ENCODE measurements at regions of chr1 and their contacts with region 1.

Region 1: GRCh38 chr1:205591522-205592351 is 40.1 kb downstream of the ELK4 start:
- DNase-seq: peak; percentile 74
- ATAC-seq: peak; percentile 97
- H3K4me3 ChIP-seq: peak overlapping the region; percentile 46
- H3K27ac ChIP-seq: peak overlapping the region; percentile 11; the same call in 1 of the 2 replicates
- H3K4me1 ChIP-seq: peaks cover 4% of the 10 kb centered on the region
- H3K27me3 ChIP-seq: no peaks in the 10 kb centered on the region
- CTCF ChIP-seq: peak; percentile 99
- POLR2A ChIP-seq: peak; percentile 55; the same call in 1 of the 2 replicates
- RAD21 ChIP-seq: peak; percentile 100

Region 2: GRCh38 chr1:205528887-205529825 is 62.6 kb before region 1 on chr1:
- CTCF ChIA-PET with region 1: interaction called, 6 read pairs
- POLR2A ChIA-PET with region 1: no interaction called
- dilution Hi-C with region 1: no loop called
- in situ Hi-C with region 1: no loop called
- intact Hi-C with region 1: loop called (anchors 1 kb)
- DNase-seq: peak; percentile 50
- ATAC-seq: peak; percentile 95
- H3K4me3 ChIP-seq: no peak overlapping the region
- H3K27ac ChIP-seq: no peak overlapping the region
- H3K4me1 ChIP-seq: no peaks in the 10 kb centered on the region
- H3K27me3 ChIP-seq: peaks cover 26% of the 10 kb centered on the region
- CTCF ChIP-seq: peak; percentile 85
- POLR2A ChIP-seq: no peak
- RAD21 ChIP-seq: peak; percentile 89

Region 3: GRCh38 chr1:205631727-205632373 is 40.1 kb after region 1 on chr1 and contains the start of gene ELK4:
- CTCF ChIA-PET with region 1: interaction called, 30 read pairs
- POLR2A ChIA-PET with region 1: no interaction called
- dilution Hi-C with region 1: no loop called
- in situ Hi-C with region 1: loop called (anchors 5 kb)
- intact Hi-C with region 1: loop called (anchors 1 kb)
- DNase-seq: peak; percentile 98
- ATAC-seq: peak; percentile 92
- H3K4me3 ChIP-seq: peak within 1 kb of the TSS; percentile 99
- H3K27ac ChIP-seq: peak within 1 kb of the TSS; percentile 98
- H3K4me1 ChIP-seq: peaks cover 4% of the 10 kb centered on the region
- H3K27me3 ChIP-seq: no peaks in the 10 kb centered on the region
- CTCF ChIP-seq: peak; percentile 86
- POLR2A ChIP-seq: peak; percentile 95
- RAD21 ChIP-seq: peak; percentile 79
- total RNA-seq, gene ELK4: 11.3 and 15.6 TPM in 2 replicates

Region 4: GRCh38 chr1:205700865-205701401 is 109.2 kb after region 1 on chr1:
- CTCF ChIA-PET with region 1: interaction called, 10 read pairs
- POLR2A ChIA-PET with region 1: no interaction called
- dilution Hi-C with region 1: no loop called
- in situ Hi-C with region 1: no loop called
- intact Hi-C with region 1: no loop called
- DNase-seq: no peak
- ATAC-seq: peak; percentile 74
- H3K4me3 ChIP-seq: no peak overlapping the region
- H3K27ac ChIP-seq: no peak overlapping the region
- H3K4me1 ChIP-seq: no peaks in the 10 kb centered on the region; the same call in 1 of the 2 replicates
- H3K27me3 ChIP-seq: no peaks in the 10 kb centered on the region
- CTCF ChIP-seq: no peak
- POLR2A ChIP-seq: no peak
- RAD21 ChIP-seq: no peak

Region 5: DNA sequence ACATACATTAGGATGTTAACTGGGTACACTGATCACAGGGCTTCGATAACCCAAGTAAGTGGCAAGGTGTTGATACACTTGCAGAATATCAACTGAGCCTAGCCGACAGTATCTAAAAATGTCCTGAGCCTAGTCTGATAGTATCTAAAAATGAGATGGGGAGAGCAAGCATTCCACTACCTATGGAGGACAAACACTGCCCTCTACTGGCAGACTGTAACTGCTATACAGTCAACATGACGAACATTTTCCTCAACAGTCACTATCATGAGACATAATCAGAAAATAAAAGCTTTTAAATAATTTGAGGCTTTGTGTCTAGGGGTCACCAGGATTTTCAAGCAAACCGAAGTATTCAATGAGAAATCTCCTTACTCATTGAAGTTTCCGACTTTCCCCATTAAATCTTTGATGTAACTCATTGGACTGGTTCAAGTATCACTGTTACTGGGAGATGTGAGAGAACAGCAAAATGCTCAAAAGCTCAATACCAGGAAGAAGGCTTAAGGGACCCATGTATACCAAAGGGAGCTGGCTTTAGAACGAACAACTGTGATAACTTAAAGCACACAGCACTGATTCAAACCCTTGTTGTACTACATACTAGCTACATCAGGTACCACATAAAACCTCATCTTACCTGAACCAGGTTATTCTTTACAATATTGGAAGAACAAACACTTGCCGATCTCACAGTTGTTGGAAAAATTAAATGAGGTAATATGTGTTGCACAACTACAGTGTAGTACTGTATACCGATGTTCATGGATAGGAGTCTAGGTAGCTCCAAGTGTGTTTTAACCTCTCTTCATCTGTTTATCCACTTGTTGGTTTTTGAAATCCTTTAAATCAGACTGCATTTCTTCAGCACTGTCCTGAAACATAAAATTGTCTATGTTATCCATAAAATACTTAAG is 119.6 kb after region 1 on chr1:
- CTCF ChIA-PET with region 1: interaction called, 21 read pairs
- POLR2A ChIA-PET with region 1: no interaction called
- dilution Hi-C with region 1: no loop called
- in situ Hi-C with region 1: loop called (anchors 5 kb)
- intact Hi-C with region 1: loop called (anchors 1 kb)
- DNase-seq: peak; percentile 86
- ATAC-seq: peak; percentile 78
- H3K4me3 ChIP-seq: no peak overlapping the region
- H3K27ac ChIP-seq: no peak overlapping the region
- H3K4me1 ChIP-seq: peaks cover 8% of the 10 kb centered on the region
- H3K27me3 ChIP-seq: no peaks in the 10 kb centered on the region
- CTCF ChIP-seq: peak; percentile 93
- POLR2A ChIP-seq: no peak
- RAD21 ChIP-seq: peak; percentile 88

Region 6: GRCh38 chr1:205907794-205908193 is 316.1 kb after region 1 on chr1:
- CTCF ChIA-PET with region 1: no interaction called
- POLR2A ChIA-PET with region 1: no interaction called
- dilution Hi-C with region 1: no loop called
- in situ Hi-C with region 1: no loop called
- intact Hi-C with region 1: loop called (anchors 5 kb)
- DNase-seq: peak; percentile 49
- ATAC-seq: peak; percentile 88
- H3K4me3 ChIP-seq: no peak overlapping the region
- H3K27ac ChIP-seq: no peak overlapping the region
- H3K4me1 ChIP-seq: no peaks in the 10 kb centered on the region
- H3K27me3 ChIP-seq: peaks cover 11% of the 10 kb centered on the region
- CTCF ChIP-seq: peak; percentile 64
- POLR2A ChIP-seq: no peak
- RAD21 ChIP-seq: peak; percentile 63

Measured in IMR-90 (cell line).